Heart left ventricle (tissue), 16 donors: ENCODE measurements at regions of chr7 and their contacts with region 1.

Region 1: GRCh38 chr7:137081321-137082093 is 213.1 kb downstream of the CHRM2 start:
- DNase-seq: peak in 4 of 5 donors; percentile 77 to 88 (median 82)
- ATAC-seq: peak; percentile 92 to 96 (median 96)
- H3K4me3 ChIP-seq: no peak overlapping the region
- H3K27ac ChIP-seq: peak overlapping the region; percentile 16 to 89 (median 64)
- H3K4me1 ChIP-seq: peaks cover 0 to 42% (median 15%) of the 10 kb centered on the region in 12 donors
- H3K27me3 ChIP-seq: no peaks in the 10 kb centered on the region
- CTCF ChIP-seq: no peak
- POLR2A ChIP-seq: no peak

Region 2: GRCh38 chr7:136693166-136694119 is 388.1 kb before region 1 on chr7:
- intact Hi-C with region 1: loop called in 1 of 10 experiments (anchors 10 kb)
- DNase-seq: no peak
- ATAC-seq: no peak
- H3K4me3 ChIP-seq: no peak overlapping the region
- H3K27ac ChIP-seq: no peak overlapping the region
- H3K4me1 ChIP-seq: peaks cover 0 to 5% (median 0%) of the 10 kb centered on the region in 12 donors
- H3K27me3 ChIP-seq: no peaks in the 10 kb centered on the region
- CTCF ChIP-seq: no peak
- POLR2A ChIP-seq: no peak

Region 3: GRCh38 chr7:136874238-136875032 is 207.1 kb before region 1 on chr7:
- intact Hi-C with region 1: loop called in 7 of 10 experiments (anchors 2 to 10 kb)
- DNase-seq: no peak
- ATAC-seq: no peak
- H3K4me3 ChIP-seq: no peak overlapping the region
- H3K27ac ChIP-seq: peak overlapping the region in 8 of 12 donors; percentile 9 to 83 (median 36)
- H3K4me1 ChIP-seq: peaks cover 0 to 34% (median 5%) of the 10 kb centered on the region in 12 donors
- H3K27me3 ChIP-seq: peaks cover 0 to 28% (median 3%) of the 10 kb centered on the region in 9 donors
- CTCF ChIP-seq: peak in 8 of 12 donors; percentile 9 to 39 (median 26)
- POLR2A ChIP-seq: no peak

Region 4: GRCh38 chr7:136938476-136938875 is 143.0 kb before region 1 on chr7:
- intact Hi-C with region 1: loop called in 2 of 10 experiments (anchors 5 to 10 kb)
- DNase-seq: peak in 1 of 5 donors; percentile 60
- ATAC-seq: peak in 2 of 4 donors; percentile 25 to 38
- H3K4me3 ChIP-seq: no peak overlapping the region
- H3K27ac ChIP-seq: peak overlapping the region in 2 of 12 donors; percentile 43 to 84
- H3K4me1 ChIP-seq: peaks cover 0 to 34% (median 8%) of the 10 kb centered on the region in 12 donors
- H3K27me3 ChIP-seq: no peaks in the 10 kb centered on the region
- CTCF ChIP-seq: no peak
- POLR2A ChIP-seq: no peak

Region 5: GRCh38 chr7:137006293-137006692 is 75.2 kb before region 1 on chr7:
- intact Hi-C with region 1: loop called in 1 of 10 experiments (anchors 10 kb)
- DNase-seq: peak in 1 of 5 donors; percentile 31
- ATAC-seq: peak; percentile 65 to 83 (median 77)
- H3K4me3 ChIP-seq: no peak overlapping the region
- H3K27ac ChIP-seq: peak overlapping the region in 9 of 12 donors; percentile 17 to 78 (median 63)
- H3K4me1 ChIP-seq: peaks cover 0 to 26% (median 8%) of the 10 kb centered on the region in 12 donors
- H3K27me3 ChIP-seq: no peaks in the 10 kb centered on the region
- CTCF ChIP-seq: no peak
- POLR2A ChIP-seq: no peak